ENCODE measurements at regions of chr3 and their contacts with region 1.

Region 1: GRCh38 chr3:178385280-178385952 is 150.8 kb upstream of the KCNMB2 start:
- DNase-seq: peak; percentile 32
- ATAC-seq: peak; percentile 84
- H3K4me3 ChIP-seq: no peak overlapping the region
- H3K27ac ChIP-seq: peak overlapping the region; percentile 87
- H3K4me1 ChIP-seq: peaks cover 18% of the 10 kb centered on the region
- H3K27me3 ChIP-seq: no peaks in the 10 kb centered on the region
- CTCF ChIP-seq: peak; percentile 84; the same call in 1 of the 2 replicates

Region 2: GRCh38 chr3:176514297-176514696 is 1871.1 kb before region 1 on chr3:
- CTCF ChIA-PET with region 1: no interaction called
- POLR2A ChIA-PET with region 1: no interaction called
- in situ Hi-C with region 1: no loop called
- intact Hi-C with region 1: loop called (anchors 2 kb)
- DNase-seq: peak; percentile 39
- ATAC-seq: peak; percentile 98
- H3K4me3 ChIP-seq: no peak overlapping the region
- H3K27ac ChIP-seq: peak overlapping the region; percentile 35
- H3K4me1 ChIP-seq: peaks cover 5% of the 10 kb centered on the region; the same call in 1 of the 2 replicates
- H3K27me3 ChIP-seq: no peaks in the 10 kb centered on the region
- CTCF ChIP-seq: peak; percentile 85

Region 3: GRCh38 chr3:176939022-176939817 is 1446.2 kb before region 1 on chr3:
- CTCF ChIA-PET with region 1: no interaction called
- POLR2A ChIA-PET with region 1: no interaction called
- in situ Hi-C with region 1: no loop called
- intact Hi-C with region 1: loop called (anchors 10 kb)
- DNase-seq: peak; percentile 66
- ATAC-seq: peak; percentile 99
- H3K4me3 ChIP-seq: no peak overlapping the region
- H3K27ac ChIP-seq: no peak overlapping the region
- H3K4me1 ChIP-seq: no peaks in the 10 kb centered on the region
- H3K27me3 ChIP-seq: no peaks in the 10 kb centered on the region
- CTCF ChIP-seq: peak; percentile 89

Region 4: DNA sequence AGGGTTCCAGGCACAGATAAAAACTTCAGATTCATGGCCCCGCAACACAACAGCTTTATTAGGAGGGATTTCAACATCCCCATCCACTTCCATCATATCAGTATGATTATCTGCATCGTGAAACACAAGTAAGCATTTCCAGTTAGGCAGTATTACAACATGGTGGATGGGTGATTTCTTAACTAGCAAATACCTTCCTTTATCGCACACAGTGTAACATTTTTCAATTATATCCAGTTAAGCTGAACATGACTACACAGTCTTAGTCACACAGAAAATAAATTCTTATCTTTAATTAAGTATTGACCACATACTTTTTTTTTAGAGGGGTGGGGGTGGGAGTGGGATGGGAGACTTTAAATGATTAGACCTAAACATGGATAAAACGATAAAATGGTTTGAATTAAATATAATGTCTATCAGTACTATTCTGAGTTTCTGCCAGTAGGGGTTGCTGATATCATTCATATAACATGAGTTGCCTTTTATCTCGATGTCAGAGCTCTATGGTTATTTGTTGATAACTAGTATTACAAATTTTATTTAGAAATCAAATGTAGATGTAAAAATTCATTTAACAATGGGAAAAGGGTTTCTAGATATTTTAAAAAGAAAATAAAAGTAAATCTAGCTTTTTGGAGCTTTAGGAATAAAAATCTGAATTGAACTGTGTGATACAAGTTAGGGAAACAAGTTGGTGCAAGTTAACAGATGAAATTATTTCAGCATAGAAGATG is 1334.7 kb before region 1 on chr3:
- CTCF ChIA-PET with region 1: interaction called, 4 read pairs
- POLR2A ChIA-PET with region 1: no interaction called
- in situ Hi-C with region 1: no loop called
- intact Hi-C with region 1: loop called (anchors 5 kb)
- DNase-seq: peak; percentile 30
- ATAC-seq: peak; percentile 84
- H3K4me3 ChIP-seq: no peak overlapping the region
- H3K27ac ChIP-seq: peak overlapping the region; percentile 85
- H3K4me1 ChIP-seq: peaks cover 34% of the 10 kb centered on the region
- H3K27me3 ChIP-seq: no peaks in the 10 kb centered on the region
- CTCF ChIP-seq: peak; percentile 69; the same call in 1 of the 2 replicates

Region 5: DNA sequence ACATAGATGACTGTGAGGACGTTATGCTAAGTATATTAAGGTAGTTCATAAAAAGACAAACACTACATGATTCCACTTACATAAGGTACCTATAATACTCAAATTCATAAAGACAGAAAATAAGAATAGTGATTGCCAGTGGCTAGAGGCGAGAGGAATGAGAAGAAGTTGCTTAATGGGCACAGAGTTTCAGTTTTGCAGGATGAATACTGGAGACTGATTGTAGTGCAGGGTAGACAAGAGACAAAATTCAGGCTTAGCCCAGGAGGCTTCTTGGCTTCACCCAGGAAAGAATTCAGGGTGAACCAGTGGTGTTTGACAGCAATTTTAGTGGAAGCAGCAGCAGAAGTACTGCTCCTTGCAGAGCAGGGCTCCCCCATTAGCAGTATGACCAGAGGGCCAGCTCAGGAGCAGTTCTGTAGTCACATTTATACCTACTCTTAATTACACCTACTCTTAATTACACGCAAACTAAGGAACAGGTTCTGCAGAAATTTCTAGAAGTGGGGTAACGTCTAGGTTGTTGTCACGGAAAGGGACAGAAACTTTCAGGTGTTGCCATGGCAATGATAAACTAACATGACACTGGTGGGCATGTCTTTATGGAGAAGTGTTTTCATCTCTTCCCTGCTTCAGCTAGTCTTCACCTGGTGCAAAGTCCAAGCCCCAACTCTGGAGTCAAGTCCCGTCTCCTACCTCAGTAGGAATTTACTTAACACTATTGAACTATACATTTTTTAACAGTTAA is 1243.3 kb before region 1 on chr3:
- CTCF ChIA-PET with region 1: no interaction called
- POLR2A ChIA-PET with region 1: no interaction called
- in situ Hi-C with region 1: no loop called
- intact Hi-C with region 1: no loop called
- DNase-seq: no peak
- ATAC-seq: peak; percentile 17; the same call in 1 of the 2 replicates
- H3K4me3 ChIP-seq: no peak overlapping the region
- H3K27ac ChIP-seq: peak overlapping the region; percentile 55
- H3K4me1 ChIP-seq: peaks cover 66% of the 10 kb centered on the region
- H3K27me3 ChIP-seq: no peaks in the 10 kb centered on the region
- CTCF ChIP-seq: no peak

Region 6: DNA sequence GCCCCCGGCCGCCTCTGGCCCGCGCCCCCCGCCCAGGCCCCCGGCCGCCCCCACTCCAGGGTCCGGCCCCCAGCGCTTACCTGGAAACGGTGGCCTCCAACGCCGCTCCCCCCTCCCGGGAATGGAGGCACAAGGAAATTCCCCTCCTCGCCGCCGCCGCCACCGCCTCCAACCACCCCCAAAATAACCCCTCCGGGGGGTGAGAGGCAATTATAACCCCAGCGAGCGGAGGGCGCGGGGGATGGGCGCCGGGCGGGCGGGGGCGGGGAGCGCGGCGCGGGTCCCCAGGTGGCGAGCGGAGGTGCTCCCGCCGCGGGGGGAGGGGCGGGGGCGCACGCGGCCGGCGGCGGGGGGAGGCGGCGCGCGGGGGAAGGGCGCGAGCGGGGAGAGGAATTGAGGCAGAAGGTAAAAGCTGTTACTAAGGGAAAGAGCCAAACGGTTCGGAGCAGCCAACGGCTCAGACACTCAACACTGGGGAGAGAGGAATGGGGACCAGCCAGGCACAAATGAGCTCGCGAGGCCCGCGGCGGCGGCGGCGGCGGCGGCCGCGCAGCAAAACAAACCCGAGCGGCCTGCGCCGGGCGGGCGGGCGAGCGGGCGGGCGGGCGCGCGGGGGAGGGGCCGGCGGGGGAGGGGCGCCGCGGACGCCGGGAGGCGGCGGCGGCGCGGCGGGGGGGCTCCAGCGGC is 1188.2 kb before region 1 on chr3 and contains the start of gene TBL1XR1:
- CTCF ChIA-PET with region 1: interaction called, 6 read pairs
- POLR2A ChIA-PET with region 1: no interaction called
- in situ Hi-C with region 1: no loop called
- intact Hi-C with region 1: loop called (anchors 10 kb)
- DNase-seq: peak; percentile 48
- ATAC-seq: peak; percentile 81
- H3K4me3 ChIP-seq: peak within 1 kb of the TSS; percentile 75 to 84
- H3K27ac ChIP-seq: peak within 1 kb of the TSS; percentile 100
- H3K4me1 ChIP-seq: peaks cover 42% of the 10 kb centered on the region
- H3K27me3 ChIP-seq: no peaks in the 10 kb centered on the region
- CTCF ChIP-seq: no peak
- total RNA-seq, gene TBL1XR1: 192 TPM

Region 7: DNA sequence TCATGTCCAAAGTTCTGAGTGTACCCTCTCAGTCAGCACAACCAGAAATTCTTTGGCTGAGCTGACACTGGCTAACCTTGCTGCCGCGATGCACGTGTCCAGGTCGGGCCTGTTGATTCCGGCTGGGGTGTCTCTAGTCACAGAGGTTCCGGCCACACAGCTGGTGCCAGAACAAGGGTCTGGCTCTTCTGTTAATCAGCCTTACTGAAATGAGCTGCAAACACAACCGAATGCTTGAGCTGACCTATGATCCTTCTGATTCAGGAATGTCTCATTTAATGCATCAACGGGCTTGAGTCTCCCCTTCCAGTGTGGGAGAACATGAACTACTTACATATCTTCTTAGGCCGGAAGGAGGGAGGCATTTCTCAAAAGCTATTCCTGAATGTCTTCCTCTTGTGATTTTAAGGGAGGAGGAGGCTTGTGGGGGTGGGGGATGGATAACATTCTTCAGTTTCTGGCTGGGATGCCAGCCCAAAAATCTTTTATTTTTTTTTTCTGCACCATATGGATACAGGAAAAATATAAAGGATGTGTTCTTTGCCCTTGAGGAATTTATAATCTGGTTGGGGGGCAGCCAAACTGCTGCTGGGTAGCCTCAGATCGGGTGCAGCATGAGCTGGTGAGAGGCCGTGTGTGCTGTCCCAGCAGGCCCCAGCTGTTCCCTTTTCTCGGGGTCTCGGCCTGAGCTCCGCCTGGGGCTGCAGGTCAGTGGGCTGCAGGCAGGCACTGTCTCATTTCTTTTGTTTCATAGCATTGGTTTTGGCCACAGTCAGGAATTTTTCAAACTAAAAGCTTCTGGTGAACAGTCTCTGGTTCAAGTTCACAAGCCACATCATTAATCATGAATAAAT is 869.0 kb before region 1 on chr3:
- CTCF ChIA-PET with region 1: no interaction called
- POLR2A ChIA-PET with region 1: no interaction called
- in situ Hi-C with region 1: no loop called
- intact Hi-C with region 1: loop called (anchors 10 kb)
- DNase-seq: no peak
- ATAC-seq: peak; percentile 75
- H3K4me3 ChIP-seq: no peak overlapping the region
- H3K27ac ChIP-seq: peak overlapping the region; percentile 86
- H3K4me1 ChIP-seq: peaks cover 17% of the 10 kb centered on the region
- H3K27me3 ChIP-seq: no peaks in the 10 kb centered on the region
- CTCF ChIP-seq: no peak

Region 8: GRCh38 chr3:177824190-177824786 is 561.1 kb before region 1 on chr3:
- CTCF ChIA-PET with region 1: no interaction called
- POLR2A ChIA-PET with region 1: no interaction called
- in situ Hi-C with region 1: no loop called
- intact Hi-C with region 1: loop called (anchors 10 kb)
- DNase-seq: no peak
- ATAC-seq: peak; percentile 89
- H3K4me3 ChIP-seq: peak overlapping the region in 1 of 2 experiments; percentile 2; a peak in 1 of 4 replicates
- H3K27ac ChIP-seq: peak overlapping the region; percentile 80
- H3K4me1 ChIP-seq: peaks cover 50% of the 10 kb centered on the region
- H3K27me3 ChIP-seq: no peaks in the 10 kb centered on the region
- CTCF ChIP-seq: no peak

Measured in Panc1 (cell line).